H1 (cell line): ENCODE measurements at regions of chr17 and their contacts with region 1.

Region 1: GRCh38 chr17:82767041-82767754 is 15.3 kb downstream of the TBCD start:
- DNase-seq: peak in 1 of 2 experiments; percentile 87
- H3K4me3 ChIP-seq: no peak overlapping the region
- H3K27ac ChIP-seq: no peak overlapping the region
- H3K4me1 ChIP-seq: no peaks in the 10 kb centered on the region
- H3K27me3 ChIP-seq: no peaks in the 10 kb centered on the region
- CTCF ChIP-seq: peak; percentile 56 to 71 (median 68)
- EP300 ChIP-seq: no peak
- POLR2A ChIP-seq: no peak
- RAD21 ChIP-seq: peak; percentile 78 to 83

Region 2: DNA sequence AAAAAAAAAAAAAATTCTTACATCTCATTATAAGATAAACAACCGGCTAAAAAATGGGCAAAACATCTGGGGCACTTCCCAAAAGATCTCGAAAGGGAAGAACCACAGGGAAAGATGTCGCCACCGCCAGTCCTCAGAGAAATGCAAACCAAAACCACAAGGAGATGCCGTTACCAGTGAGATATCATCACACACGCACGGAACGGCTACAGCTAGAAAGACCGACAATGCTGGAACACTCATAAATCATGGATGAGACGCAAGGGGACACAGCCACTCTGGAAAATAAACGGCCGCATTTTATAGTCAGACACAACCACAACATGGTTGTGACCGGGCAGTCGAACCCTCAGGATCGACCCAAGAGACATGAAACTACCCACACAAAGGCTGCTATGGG is 143.5 kb before region 1 on chr17:
- CTCF ChIA-PET with region 1: no interaction called
- POLR2A ChIA-PET with region 1: no interaction called
- DNase-seq: no peak
- H3K4me3 ChIP-seq: no peak overlapping the region
- H3K27ac ChIP-seq: no peak overlapping the region
- H3K4me1 ChIP-seq: no peaks in the 10 kb centered on the region
- H3K27me3 ChIP-seq: no peaks in the 10 kb centered on the region
- CTCF ChIP-seq: no peak
- EP300 ChIP-seq: no peak
- POLR2A ChIP-seq: no peak
- RAD21 ChIP-seq: no peak

Region 3: GRCh38 chr17:82679586-82680465 is 87.4 kb before region 1 on chr17:
- CTCF ChIA-PET with region 1: interaction called, 20 read pairs
- POLR2A ChIA-PET with region 1: interaction called, 3 read pairs
- DNase-seq: no peak
- H3K4me3 ChIP-seq: no peak overlapping the region
- H3K27ac ChIP-seq: no peak overlapping the region
- H3K4me1 ChIP-seq: no peaks in the 10 kb centered on the region; a peak in 1 of 7 replicates
- H3K27me3 ChIP-seq: no peaks in the 10 kb centered on the region
- CTCF ChIP-seq: peak; percentile 61 to 70 (median 70)
- EP300 ChIP-seq: no peak
- POLR2A ChIP-seq: no peak
- RAD21 ChIP-seq: peak; percentile 74 to 79

Region 4: DNA sequence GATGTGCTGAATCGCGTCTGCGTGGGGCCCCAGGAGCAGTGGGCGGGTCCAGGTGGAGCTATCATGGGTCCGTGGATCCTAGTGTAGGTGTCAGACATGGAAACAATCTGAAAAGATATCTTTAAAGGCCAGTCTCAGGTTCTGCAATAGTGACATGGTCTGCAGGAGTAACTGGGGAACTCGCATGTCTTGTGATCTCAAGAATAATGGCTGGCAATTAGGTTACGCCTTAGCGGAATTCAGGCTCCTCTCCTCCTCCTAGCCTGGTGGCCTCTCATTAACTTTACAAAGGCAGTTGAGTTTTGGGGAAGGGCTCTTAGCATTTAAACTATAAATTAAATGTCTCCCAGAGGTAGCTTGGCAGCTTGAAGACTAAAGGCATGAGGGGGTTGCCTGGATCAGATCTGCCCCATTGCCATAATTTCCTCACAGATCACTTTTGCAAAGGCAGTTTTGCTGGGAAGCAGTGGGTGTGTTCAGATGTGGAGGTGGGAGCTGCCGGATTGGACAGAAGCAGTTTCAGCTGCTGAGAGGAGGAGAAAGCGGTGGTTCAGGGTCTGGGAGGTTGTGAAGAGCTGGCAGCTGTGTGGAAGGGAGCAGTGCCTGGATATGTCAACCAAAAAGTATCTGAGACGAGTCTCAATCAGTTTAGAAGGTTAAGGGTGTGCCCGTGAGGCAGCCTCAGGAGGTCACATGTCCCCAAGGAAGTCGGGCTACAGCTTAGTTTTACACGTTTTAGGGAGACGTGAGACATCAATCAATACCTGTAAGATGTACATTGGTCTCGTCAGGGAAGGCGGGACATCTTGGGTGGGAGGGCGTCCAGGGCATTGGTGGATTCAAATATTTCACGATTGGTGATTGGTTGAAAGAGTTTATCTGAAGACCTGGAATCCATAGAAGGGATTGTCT is 12.6 kb before region 1 on chr17:
- CTCF ChIA-PET with region 1: interaction called, 21 read pairs
- POLR2A ChIA-PET with region 1: interaction called, 5 read pairs
- DNase-seq: peak; percentile 61 to 68
- H3K4me3 ChIP-seq: peak overlapping the region; percentile 13 to 51 (median 24); a peak in 7 of 8 replicates
- H3K27ac ChIP-seq: peak overlapping the region; percentile 76
- H3K4me1 ChIP-seq: peaks cover 8 to 23% (median 16%) of the 10 kb centered on the region in 4 experiments
- H3K27me3 ChIP-seq: peaks cover 0 to 6% (median 3%) of the 10 kb centered on the region in 4 experiments; a peak in 3 of 7 replicates
- CTCF ChIP-seq: no peak
- EP300 ChIP-seq: no peak
- POLR2A ChIP-seq: no peak; a peak in 1 of 3 replicates
- RAD21 ChIP-seq: no peak

Region 5: GRCh38 chr17:82789806-82790205 is 22.6 kb after region 1 on chr17:
- CTCF ChIA-PET with region 1: no interaction called
- POLR2A ChIA-PET with region 1: no interaction called
- DNase-seq: no peak
- H3K4me3 ChIP-seq: no peak overlapping the region
- H3K27ac ChIP-seq: no peak overlapping the region
- H3K4me1 ChIP-seq: no peaks in the 10 kb centered on the region
- H3K27me3 ChIP-seq: no peaks in the 10 kb centered on the region
- CTCF ChIP-seq: no peak
- EP300 ChIP-seq: no peak
- POLR2A ChIP-seq: no peak
- RAD21 ChIP-seq: no peak